ENCODE measurements at regions of chr17 and their contacts with region 1.

Region 1: GRCh38 chr17:11690681-11691080 is 92.4 kb downstream of the DNAH9 start:
- DNase-seq: no peak
- ATAC-seq: no peak
- H3K4me3 ChIP-seq: no peak overlapping the region
- H3K27ac ChIP-seq: no peak overlapping the region
- H3K4me1 ChIP-seq: no peaks in the 10 kb centered on the region
- H3K27me3 ChIP-seq: no peaks in the 10 kb centered on the region
- CTCF ChIP-seq: no peak
- POLR2A ChIP-seq: no peak

Region 2: DNA sequence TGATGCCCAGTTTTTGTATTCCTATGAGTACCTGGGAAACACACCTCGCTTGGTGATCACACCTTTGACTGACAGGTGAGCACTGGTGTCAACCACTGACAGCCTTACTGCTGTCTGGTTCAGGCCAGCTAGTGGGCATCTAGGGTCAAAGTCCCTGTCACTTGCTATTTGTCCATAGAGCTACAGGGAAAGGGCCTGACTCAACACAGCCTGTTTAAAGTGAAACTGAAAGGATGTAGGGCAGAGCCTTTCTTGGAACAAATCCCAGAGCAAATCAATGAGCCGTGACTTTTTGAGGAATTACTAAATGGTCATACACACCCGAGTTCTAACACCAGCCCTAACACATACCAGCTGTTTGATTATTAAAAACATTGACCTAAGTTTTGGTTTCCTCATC is 14.4 kb after region 1 on chr17:
- intact Hi-C with region 1: loop called in 1 of 10 experiments (anchors 1 kb)
- DNase-seq: no peak
- ATAC-seq: peak in 2 of 4 donors; percentile 24 to 57
- H3K4me3 ChIP-seq: peak overlapping the region in 3 of 12 donors; percentile 12 to 20 (median 16)
- H3K27ac ChIP-seq: no peak overlapping the region
- H3K4me1 ChIP-seq: peaks cover 0 to 5% (median 0%) of the 10 kb centered on the region in 12 donors
- H3K27me3 ChIP-seq: no peaks in the 10 kb centered on the region
- CTCF ChIP-seq: no peak
- POLR2A ChIP-seq: no peak

Region 3: DNA sequence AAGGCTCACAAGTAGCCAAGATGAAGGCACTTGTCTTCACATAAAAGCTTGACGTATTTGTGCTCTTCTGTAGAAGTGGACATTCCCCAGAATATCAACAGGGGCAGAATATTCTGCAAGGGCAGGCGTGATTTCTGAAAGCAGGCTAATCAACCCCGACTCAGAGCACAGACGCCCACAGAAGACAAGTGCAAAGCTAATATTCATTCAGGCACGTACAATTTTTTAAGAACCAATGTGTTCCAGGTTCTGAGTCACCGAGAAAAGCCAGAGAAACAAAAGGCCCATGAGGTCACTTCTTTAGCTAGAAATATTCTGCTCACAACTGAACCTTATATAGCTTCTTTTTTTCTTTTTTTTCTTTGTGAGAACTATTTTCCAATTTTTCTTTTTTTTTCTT is 29.2 kb after region 1 on chr17:
- intact Hi-C with region 1: no loop called
- DNase-seq: no peak
- ATAC-seq: no peak
- H3K4me3 ChIP-seq: no peak overlapping the region
- H3K27ac ChIP-seq: no peak overlapping the region
- H3K4me1 ChIP-seq: no peaks in the 10 kb centered on the region
- H3K27me3 ChIP-seq: no peaks in the 10 kb centered on the region
- CTCF ChIP-seq: no peak
- POLR2A ChIP-seq: no peak

Region 4: GRCh38 chr17:11757815-11758214 is 67.1 kb after region 1 on chr17:
- intact Hi-C with region 1: no loop called
- DNase-seq: no peak
- ATAC-seq: no peak
- H3K4me3 ChIP-seq: no peak overlapping the region
- H3K27ac ChIP-seq: no peak overlapping the region
- H3K4me1 ChIP-seq: no peaks in the 10 kb centered on the region
- H3K27me3 ChIP-seq: no peaks in the 10 kb centered on the region
- CTCF ChIP-seq: no peak
- POLR2A ChIP-seq: no peak

Measured in heart left ventricle (tissue), 16 donors.